ENCODE measurements at regions of chr14 and their contacts with region 1.

Region 1: DNA sequence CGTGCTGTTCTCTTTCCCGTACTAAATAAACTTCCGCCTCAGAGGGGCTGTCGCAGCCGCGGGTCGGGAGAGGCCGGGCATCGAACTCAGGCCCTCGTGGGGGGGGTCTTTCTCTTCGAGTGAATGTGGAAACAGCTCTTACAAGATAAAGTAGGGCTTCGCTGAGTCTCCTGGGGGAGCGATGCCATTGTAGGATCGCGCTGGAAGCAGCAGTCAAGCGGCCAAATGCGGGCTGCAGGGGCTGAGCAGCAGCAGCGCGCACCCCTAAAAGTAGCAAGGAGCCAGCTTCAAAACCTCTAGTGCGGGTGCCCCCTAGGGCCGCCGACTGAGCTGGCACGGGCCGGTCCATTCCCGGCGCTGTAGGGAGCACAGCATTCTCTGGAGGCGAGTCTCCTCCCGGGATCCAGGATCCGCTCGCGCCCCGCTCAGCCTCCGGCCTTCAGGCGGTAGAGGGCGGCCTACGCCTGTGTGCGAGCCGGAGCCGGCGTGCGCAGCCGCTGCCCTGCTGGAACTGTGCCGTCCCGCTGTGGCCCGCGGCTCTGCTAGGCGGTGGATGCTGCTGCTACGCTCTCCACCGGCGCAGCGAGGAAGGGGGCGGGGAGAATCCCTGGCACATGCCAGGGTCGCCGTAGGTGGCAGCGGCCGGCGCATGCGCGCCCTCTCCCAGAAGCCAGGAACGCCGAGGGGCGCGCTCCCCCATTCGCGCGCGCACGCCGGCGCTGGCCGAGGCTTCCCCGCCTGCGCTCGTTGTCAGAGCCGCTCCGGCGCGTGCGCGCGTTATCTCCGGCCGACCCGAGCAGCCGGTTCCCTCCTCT is at the start of gene FUT8:
- DNase-seq: peak; percentile 97
- ATAC-seq: peak; percentile 94 to 97
- total RNA-seq, gene FUT8: 13.4 to 14.8 TPM

Region 2: GRCh38 chr14:65164068-65164824 is 248.0 kb before region 1 on chr14:
- intact Hi-C with region 1: loop called in 1 of 2 experiments (anchors 5 kb)
- DNase-seq: no peak
- ATAC-seq: peak; percentile 47 to 52

Region 3: GRCh38 chr14:65222440-65222858 is 189.8 kb before region 1 on chr14:
- intact Hi-C with region 1: loop called in 1 of 2 experiments (anchors 10 kb)
- DNase-seq: peak; percentile 47
- ATAC-seq: peak; percentile 63 to 79

Region 4: GRCh38 chr14:65824285-65824977 is 412.2 kb after region 1 on chr14:
- intact Hi-C with region 1: loop called (anchors 5 to 10 kb)
- DNase-seq: no peak
- ATAC-seq: peak; percentile 68 to 80

Region 5: DNA sequence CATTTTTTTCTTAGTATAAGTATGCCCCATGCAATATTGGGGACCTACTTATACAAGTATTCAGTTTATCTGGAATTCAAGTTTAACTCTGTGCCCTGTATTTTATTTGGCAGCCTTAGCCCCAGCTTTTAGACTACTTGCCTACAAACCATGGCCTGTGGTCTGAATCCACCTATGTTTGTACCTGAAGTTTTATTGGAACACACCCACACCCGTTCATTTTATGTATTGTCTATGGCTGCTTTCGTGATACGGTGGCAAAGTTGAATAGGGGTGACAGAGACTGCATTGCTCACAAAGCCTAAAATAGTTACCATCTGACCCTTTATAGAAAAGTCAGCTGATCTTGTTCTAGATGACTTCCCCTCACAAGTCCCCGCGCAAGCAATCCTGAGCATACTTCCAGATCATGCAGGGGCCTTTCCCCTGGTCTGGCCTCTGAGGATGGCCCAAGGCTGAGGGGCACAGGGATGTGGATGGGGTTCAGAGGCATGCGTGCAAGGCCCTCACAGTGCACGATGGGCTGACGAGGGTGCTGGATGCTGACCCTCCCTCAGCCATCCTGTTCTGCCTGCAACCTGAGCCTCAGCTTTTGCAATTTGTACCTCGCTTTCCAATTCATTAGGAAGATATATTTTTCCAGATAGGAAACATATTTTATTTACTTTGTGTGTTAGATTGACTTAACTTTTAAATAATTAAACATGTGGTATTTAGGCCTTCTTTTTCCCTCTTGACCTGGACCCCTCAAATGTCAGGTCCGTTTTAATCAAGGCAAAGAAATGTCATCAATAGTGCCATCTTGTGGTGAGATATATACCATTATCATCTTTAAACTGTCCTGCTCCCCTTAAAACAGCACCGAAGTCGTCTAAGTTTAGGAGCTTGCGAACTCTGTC is 546.7 kb after region 1 on chr14:
- intact Hi-C with region 1: loop called in 1 of 2 experiments (anchors 10 kb)
- DNase-seq: no peak
- ATAC-seq: peak; percentile 40 to 55

Region 6: DNA sequence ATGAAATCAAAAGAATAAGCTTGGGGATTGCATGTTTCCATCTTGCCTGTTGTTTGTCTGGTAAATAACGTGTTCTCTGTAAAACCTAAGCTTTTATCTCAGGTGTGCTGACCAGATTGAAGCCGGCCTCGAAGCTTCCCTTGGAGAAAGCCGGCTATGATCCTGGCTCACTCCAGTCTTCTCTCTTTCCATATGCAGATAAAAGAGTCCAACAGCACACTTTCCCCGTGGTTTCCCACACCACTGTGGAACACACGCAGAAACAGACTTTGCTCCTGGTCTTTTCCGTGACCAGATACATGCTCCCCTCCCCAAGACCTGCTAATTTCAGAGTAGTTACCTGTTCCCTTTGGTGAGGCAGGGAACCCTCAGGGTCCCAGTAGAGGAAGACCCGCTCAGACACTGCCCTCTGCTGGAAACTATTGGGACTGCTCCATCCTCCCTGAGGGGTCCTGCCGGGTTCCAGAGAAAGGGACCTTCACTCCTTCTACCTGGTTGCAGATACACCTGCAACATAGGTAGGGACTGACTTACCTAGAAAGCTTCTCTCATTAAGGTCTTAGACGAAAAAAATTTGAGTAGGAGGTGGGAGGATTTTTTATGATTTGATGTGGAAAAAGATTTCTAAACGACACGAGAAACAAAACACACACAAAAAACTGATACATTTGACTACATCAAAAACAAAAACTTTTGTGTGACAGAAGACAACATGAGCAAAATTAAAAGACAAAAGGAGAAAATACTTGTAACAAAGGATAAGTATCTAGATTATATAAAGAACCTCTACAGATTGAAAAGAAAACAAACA is 658.5 kb after region 1 on chr14:
- intact Hi-C with region 1: loop called in 1 of 2 experiments (anchors 5 kb)
- DNase-seq: peak; percentile 46
- ATAC-seq: peak; percentile 47 to 55

Measured in left cardiac atrium (tissue), 4 donors.